MCF 10A (cell line): ENCODE measurements at regions of chr4 and their contacts with region 1.

Region 1: DNA sequence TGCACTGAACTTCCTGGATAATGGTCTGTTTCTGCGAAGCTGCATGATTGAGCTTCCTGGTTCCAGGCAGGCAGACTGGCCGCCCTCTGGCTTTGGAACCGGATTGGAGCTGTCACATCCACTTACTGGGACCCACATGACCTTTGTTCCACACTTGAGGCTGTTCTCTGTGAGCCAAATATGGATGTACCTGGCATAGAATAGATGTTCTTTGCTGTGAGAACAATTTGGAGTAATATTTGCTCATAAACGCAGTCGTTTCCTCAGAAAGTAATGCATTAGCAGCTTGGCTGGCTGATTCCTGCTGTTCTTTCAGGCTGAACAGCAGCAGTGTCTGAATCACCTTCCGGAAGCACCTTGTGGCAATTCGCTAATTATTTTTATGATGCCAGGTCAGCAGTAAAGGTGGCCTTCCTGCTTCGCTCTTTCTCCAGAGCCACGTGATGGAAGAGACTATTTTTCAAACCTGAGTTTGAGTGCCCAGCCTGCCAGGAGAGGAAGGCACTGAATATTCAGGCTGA is 78.1 kb upstream of the BOD1L1 start:
- DNase-seq: peak; percentile 88
- H3K4me3 Mint-ChIP-seq: peak overlapping the region; percentile 63
- H3K27ac Mint-ChIP-seq: peak overlapping the region; percentile 95
- H3K4me1 Mint-ChIP-seq: peaks cover 57% of the 10 kb centered on the region
- H3K27me3 Mint-ChIP-seq: no peaks in the 10 kb centered on the region
- CTCF ChIP-seq: no peak

Region 2: GRCh38 chr4:13627606-13628301 is 77.8 kb before region 1 on chr4 and contains the start of gene BOD1L1:
- CTCF ChIA-PET with region 1: interaction called, 5 read pairs
- POLR2A ChIA-PET with region 1: interaction called, 16 read pairs
- intact Hi-C with region 1: no loop called
- DNase-seq: peak; percentile 91
- H3K4me3 Mint-ChIP-seq: peak within 1 kb of the TSS; percentile 89
- H3K27ac Mint-ChIP-seq: peak within 1 kb of the TSS; percentile 99
- H3K4me1 Mint-ChIP-seq: peaks cover 19% of the 10 kb centered on the region
- H3K27me3 Mint-ChIP-seq: no peaks in the 10 kb centered on the region
- CTCF ChIP-seq: peak; percentile 11
- total RNA-seq, gene BOD1L1: 46.8 and 55.4 TPM in 2 replicates

Region 3: GRCh38 chr4:13892739-13893105 is 187.1 kb after region 1 on chr4:
- CTCF ChIA-PET with region 1: no interaction called
- POLR2A ChIA-PET with region 1: interaction called, 4 read pairs
- intact Hi-C with region 1: loop called (anchors 2 kb)
- DNase-seq: no peak
- H3K4me3 Mint-ChIP-seq: peak overlapping the region; percentile 25
- H3K27ac Mint-ChIP-seq: peak overlapping the region; percentile 96
- H3K4me1 Mint-ChIP-seq: peaks cover 46% of the 10 kb centered on the region
- H3K27me3 Mint-ChIP-seq: no peaks in the 10 kb centered on the region
- CTCF ChIP-seq: no peak

Region 4: GRCh38 chr4:13907255-13907751 is 201.7 kb after region 1 on chr4:
- CTCF ChIA-PET with region 1: interaction called, 5 read pairs
- POLR2A ChIA-PET with region 1: interaction called, 23 read pairs
- intact Hi-C with region 1: loop called (anchors 1 kb)
- DNase-seq: peak; percentile 95
- H3K4me3 Mint-ChIP-seq: peak overlapping the region; percentile 9
- H3K27ac Mint-ChIP-seq: peak overlapping the region; percentile 96
- H3K4me1 Mint-ChIP-seq: peaks cover 40% of the 10 kb centered on the region
- H3K27me3 Mint-ChIP-seq: no peaks in the 10 kb centered on the region
- CTCF ChIP-seq: peak; percentile 35

Region 5: DNA sequence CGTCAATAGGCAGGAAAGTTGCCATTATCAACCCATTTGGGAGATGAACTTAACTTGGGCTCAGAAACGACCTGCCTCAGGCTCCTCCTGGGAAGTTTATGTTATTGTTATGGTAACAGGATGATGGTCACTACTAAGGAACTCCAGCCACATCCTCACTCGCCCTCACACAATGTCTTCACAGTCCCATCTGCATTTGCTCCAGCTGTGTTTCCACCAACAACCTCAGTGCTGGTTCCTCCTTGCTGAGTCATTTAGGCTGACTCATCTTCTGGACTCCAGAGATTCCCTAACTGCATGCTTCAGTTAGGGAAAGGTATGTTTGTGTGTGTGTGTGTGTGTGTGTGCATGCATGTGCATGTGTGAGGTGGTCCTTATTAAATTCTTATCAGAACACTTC is 215.3 kb after region 1 on chr4:
- CTCF ChIA-PET with region 1: no interaction called
- POLR2A ChIA-PET with region 1: interaction called, 16 read pairs
- intact Hi-C with region 1: loop called (anchors 2 kb)
- DNase-seq: peak; percentile 97
- H3K4me3 Mint-ChIP-seq: peak overlapping the region; percentile 24
- H3K27ac Mint-ChIP-seq: peak overlapping the region; percentile 96
- H3K4me1 Mint-ChIP-seq: peaks cover 41% of the 10 kb centered on the region
- H3K27me3 Mint-ChIP-seq: no peaks in the 10 kb centered on the region
- CTCF ChIP-seq: no peak

Region 6: GRCh38 chr4:14168919-14169318 is 463.3 kb after region 1 on chr4:
- CTCF ChIA-PET with region 1: no interaction called
- POLR2A ChIA-PET with region 1: interaction called, 4 read pairs
- intact Hi-C with region 1: loop called (anchors 5 kb)
- DNase-seq: peak; percentile 96
- H3K4me3 Mint-ChIP-seq: no peak overlapping the region
- H3K27ac Mint-ChIP-seq: no peak overlapping the region
- H3K4me1 Mint-ChIP-seq: peaks cover 20% of the 10 kb centered on the region
- H3K27me3 Mint-ChIP-seq: no peaks in the 10 kb centered on the region
- CTCF ChIP-seq: no peak